AG04450 (cell line): ENCODE measurements at regions of chr6 and their contacts with region 1.

Region 1: DNA sequence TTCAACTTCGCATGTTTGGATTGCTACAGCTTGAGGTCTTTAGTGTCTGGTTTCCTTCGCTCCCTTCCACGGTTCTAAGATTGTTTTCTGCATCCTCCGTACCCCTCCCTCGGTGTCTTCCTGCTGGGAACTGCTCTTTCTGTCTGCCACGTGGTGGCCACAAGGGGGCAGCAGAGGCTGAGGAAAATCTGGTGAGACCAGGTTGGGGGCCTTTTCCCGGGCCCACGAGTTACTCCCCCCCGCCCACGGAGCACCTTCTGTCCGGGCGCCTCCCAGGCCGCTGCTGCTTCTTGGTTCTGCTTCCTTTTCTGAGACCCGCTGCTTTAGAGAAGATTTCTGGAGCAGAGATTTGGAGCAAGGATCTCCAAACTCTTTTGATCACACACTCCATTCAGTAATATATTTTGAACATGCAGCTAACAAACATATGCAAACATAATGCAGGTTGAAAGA is 21.1 kb upstream of the NOTCH4 start:
- DNase-seq: peak; percentile 39
- H3K4me3 ChIP-seq: no peak overlapping the region
- H3K27ac ChIP-seq: no peak overlapping the region
- H3K27me3 ChIP-seq: peaks cover 24% of the 10 kb centered on the region
- CTCF ChIP-seq: peak; percentile 82

Region 2: DNA sequence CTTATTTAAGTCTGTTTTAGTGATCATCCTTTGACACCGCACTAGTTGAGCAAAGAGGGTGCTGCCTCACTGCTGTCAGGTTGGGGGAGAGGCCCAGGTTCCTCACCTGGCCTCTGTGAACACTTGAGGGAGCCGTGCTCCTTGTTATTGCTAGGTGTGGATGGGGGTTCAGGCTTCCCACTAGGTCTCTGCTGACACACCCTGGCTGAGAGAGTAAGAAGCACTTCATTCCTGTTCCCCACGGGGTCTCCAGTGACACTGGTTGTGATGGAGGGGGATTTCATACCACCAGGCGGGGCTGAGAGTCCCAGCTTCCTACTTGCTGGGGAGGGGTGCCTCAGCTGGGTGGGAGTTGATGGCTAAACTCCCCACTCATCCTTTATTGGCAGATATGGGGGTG is 10.0 kb before region 1 on chr6:
- CTCF ChIA-PET with region 1: interaction called, 14 read pairs
- POLR2A ChIA-PET with region 1: no interaction called
- DNase-seq: no peak
- H3K4me3 ChIP-seq: no peak overlapping the region
- H3K27ac ChIP-seq: no peak overlapping the region
- H3K27me3 ChIP-seq: peaks cover 5% of the 10 kb centered on the region
- CTCF ChIP-seq: no peak

Region 3: GRCh38 chr6:32255199-32256153 is 10.5 kb after region 1 on chr6:
- CTCF ChIA-PET with region 1: interaction called, 57 read pairs
- POLR2A ChIA-PET with region 1: no interaction called
- DNase-seq: peak; percentile 81
- H3K4me3 ChIP-seq: peak overlapping the region; percentile 56
- H3K27ac ChIP-seq: peak overlapping the region; percentile 97
- H3K27me3 ChIP-seq: peaks cover 2% of the 10 kb centered on the region
- CTCF ChIP-seq: peak; percentile 69